ENCODE measurements at regions of chr14 and their contacts with region 1.

Region 1: DNA sequence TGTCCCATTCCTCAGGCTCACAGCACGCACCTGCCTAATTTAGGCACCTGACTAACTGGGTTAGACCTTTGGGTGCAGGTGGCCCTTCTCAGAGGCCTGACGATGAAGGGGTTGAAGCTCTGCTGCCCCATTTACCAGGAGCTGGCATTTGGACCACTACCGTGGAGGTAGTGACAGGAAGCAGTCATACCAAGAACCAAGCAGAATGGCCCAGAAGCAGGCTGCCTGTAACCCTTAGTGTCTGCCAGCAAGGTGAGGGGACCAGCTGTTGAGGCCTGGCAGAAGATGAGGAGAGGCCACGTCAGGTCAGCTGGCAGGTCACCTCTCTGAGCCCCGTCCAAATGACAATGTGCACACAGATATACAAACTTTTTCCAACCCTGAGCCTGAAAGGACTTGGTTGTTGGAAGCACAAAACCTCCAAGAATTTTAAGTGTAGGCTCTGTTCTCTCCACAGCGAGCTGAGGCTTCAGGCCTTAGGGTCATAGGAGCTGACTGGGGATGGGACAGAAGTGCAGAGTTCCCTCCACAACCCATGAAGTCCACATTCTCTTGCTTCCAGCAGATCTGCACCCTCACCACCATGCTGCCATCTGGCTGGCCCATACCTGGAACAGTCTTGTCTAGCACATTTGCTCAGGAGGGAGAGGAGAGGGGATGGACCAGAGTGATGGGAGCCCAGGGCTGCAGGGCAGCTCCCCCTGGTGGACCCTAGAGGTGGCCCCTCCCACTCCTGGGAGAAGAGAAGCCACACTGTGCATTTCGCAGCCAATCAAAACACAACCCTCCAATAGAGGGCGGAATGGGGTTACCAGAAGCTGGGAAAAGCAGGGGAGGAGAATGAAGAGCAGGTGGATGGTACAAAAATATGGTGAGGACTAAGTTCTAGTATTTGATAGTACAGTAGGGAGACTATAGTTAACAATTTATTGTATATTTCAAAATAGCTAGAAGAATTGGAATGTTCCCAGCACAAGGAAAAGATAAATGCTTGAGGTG is 23.3 kb downstream of the VASH1 start:
- ATAC-seq: peak; percentile 86 to 100 (median 94)
- H3K4me3 ChIP-seq: no peak overlapping the region
- H3K27ac ChIP-seq: no peak overlapping the region
- H3K4me1 ChIP-seq: peaks cover 0 to 12% of the 10 kb centered on the region in 2 donors

Region 2: DNA sequence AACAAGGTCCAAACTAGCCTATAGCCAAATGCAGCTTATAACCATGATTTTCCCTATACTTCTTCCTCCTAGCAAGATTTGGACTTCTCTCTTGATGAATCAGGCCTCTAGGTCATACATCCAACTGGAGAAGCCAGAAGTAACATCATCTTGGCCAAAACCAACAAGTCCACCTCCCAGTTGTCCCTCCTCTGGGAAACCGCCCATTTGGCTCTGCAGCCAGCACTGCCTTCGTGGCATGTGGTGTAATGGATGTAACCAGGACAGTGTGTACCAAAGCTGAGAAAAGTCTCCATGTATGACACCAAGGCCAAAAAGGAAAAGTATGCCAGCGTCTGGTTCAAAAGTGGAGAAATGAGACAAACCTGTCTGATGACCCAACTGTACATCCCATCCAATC is 82.6 kb before region 1 on chr14:
- in situ Hi-C with region 1: loop called in 1 of 9 experiments (anchors 10 kb)
- ATAC-seq: no peak
- H3K4me3 ChIP-seq: no peak overlapping the region
- H3K27ac ChIP-seq: no peak overlapping the region
- H3K4me1 ChIP-seq: no peaks in the 10 kb centered on the region

Region 3: GRCh38 chr14:77097700-77098528 is 313.3 kb after region 1 on chr14 and contains the start of gene CIPC:
- in situ Hi-C with region 1: no loop called
- ATAC-seq: peak; percentile 82 to 91 (median 88)
- H3K4me3 ChIP-seq: peak within 1 kb of the TSS; percentile 58 to 82 (median 69)
- H3K27ac ChIP-seq: peak within 1 kb of the TSS; percentile 92 to 94
- H3K4me1 ChIP-seq: peaks cover 18 to 24% of the 10 kb centered on the region in 2 donors
- total RNA-seq, gene CIPC: 9.0 to 30.6 (median 16.2) TPM

Measured in motor neuron (in vitro differentiated cells).